ENCODE measurements at regions of chr17 and their contacts with region 1.

Region 1: GRCh38 chr17:38415250-38416194 is 12.7 kb upstream of the ARHGAP23 start:
- DNase-seq: no peak
- H3K4me3 ChIP-seq: peak overlapping the region; percentile 36
- CTCF ChIP-seq: no peak

Region 2: DNA sequence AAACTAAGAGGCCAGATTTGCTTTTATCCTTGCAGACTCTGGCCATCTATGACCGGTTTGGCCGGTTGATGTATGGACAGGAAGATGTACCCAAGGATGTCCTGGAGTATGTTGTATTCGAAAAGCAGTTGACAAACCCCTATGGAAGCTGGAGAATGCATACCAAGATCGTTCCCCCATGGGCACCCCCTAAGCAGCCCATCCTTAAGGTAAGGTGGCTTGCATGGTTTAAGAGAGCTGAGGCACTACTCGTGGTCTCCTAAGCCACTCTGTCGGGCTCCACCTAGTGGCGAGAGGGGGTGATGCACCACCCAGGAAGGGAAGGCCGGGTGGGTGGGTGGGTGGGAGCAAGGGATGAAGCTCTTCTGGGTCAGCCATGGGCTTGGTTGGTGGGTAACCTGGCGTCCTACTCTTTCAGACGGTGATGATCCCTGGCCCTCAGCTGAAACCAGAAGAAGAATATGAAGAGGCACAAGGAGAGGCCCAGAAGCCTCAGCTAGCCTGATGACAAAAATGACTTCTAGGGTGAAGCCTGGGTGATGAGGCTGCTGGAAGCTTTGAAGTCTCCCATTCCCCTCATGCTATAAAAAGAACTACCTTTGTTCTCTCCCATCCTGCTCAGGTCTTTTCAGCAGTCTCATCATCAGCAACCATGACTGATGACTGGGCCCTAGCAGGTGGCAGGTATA is 93.3 kb before region 1 on chr17:
- CTCF ChIA-PET with region 1: interaction called, 12 read pairs
- POLR2A ChIA-PET with region 1: no interaction called
- DNase-seq: no peak
- H3K4me3 ChIP-seq: no peak overlapping the region
- CTCF ChIP-seq: peak; percentile 77

Region 3: GRCh38 chr17:38358586-38359513 is 56.7 kb before region 1 on chr17:
- CTCF ChIA-PET with region 1: interaction called, 456 read pairs
- POLR2A ChIA-PET with region 1: no interaction called
- DNase-seq: no peak
- H3K4me3 ChIP-seq: no peak overlapping the region
- CTCF ChIP-seq: no peak

Region 4: GRCh38 chr17:38379438-38379837 is 36.1 kb before region 1 on chr17:
- CTCF ChIA-PET with region 1: interaction called, 10 read pairs
- POLR2A ChIA-PET with region 1: no interaction called
- DNase-seq: no peak
- H3K4me3 ChIP-seq: no peak overlapping the region
- CTCF ChIP-seq: no peak

Region 5: GRCh38 chr17:38403491-38403890 is 12.0 kb before region 1 on chr17:
- CTCF ChIA-PET with region 1: interaction called, 16 read pairs
- POLR2A ChIA-PET with region 1: no interaction called
- DNase-seq: no peak
- H3K4me3 ChIP-seq: no peak overlapping the region
- CTCF ChIP-seq: no peak

Region 6: GRCh38 chr17:38667099-38667786 is 251.7 kb after region 1 on chr17:
- CTCF ChIA-PET with region 1: interaction called, 10 read pairs
- POLR2A ChIA-PET with region 1: no interaction called
- DNase-seq: no peak
- H3K4me3 ChIP-seq: no peak overlapping the region
- CTCF ChIP-seq: peak; percentile 98

Measured in AG04449 (cell line).